ENCODE measurements at regions of chr22 and their contacts with region 1.

Region 1: GRCh38 chr22:38826386-38826785 is 17.4 kb downstream of the NPTXR start:
- DNase-seq: no peak
- ATAC-seq: no peak
- H3K4me3 ChIP-seq: no peak overlapping the region
- H3K27ac ChIP-seq: no peak overlapping the region
- H3K4me1 ChIP-seq: no peaks in the 10 kb centered on the region
- H3K27me3 ChIP-seq: no peaks in the 10 kb centered on the region
- CTCF ChIP-seq: no peak
- POLR2A ChIP-seq: no peak
- RAD21 ChIP-seq: no peak

Region 2: DNA sequence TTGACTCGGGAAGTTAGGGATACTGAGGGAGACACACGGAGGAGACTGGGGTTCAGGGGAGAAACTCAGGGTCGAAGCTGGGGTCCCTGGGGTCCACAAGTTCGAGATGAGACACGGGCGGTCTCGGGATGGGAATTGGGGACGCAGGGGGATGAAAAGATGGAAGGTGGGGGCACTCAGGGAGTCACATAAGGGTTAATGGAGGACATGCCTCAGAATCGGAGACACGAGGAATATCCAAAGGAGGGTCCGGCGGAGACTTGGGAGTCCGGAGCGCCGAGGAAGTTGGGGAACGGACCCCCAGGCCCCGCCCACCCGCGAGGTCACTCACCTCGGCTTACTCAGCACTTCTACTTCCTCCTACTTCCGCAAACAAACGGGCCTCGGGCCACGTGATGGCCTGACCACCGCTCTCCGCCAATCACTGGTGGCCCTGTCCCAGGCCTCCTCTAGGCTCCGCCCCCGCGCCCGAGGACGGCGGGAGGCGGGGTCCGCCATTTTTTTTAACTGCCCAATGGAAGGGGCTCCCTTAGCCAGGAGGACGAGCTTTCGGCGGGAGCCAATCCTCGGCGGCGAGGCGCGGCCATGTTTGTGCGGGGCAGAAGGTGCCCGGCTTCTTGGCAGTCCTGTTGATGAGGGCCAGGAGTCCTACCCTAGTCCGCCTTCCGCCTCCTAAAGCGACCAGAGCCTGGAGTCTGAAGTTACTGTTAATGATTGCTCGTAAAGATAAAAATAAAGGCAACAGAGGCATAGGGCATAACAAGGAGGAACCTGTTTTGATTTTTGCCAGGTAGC is 644.7 kb before region 1 on chr22 and contains the start of gene PLA2G6:
- CTCF ChIA-PET with region 1: no interaction called
- POLR2A ChIA-PET with region 1: no interaction called
- dilution Hi-C with region 1: no loop called
- in situ Hi-C with region 1: no loop called
- intact Hi-C with region 1: no loop called
- DNase-seq: peak; percentile 98
- ATAC-seq: peak; percentile 95
- H3K4me3 ChIP-seq: peak within 1 kb of the TSS; percentile 50
- H3K27ac ChIP-seq: peak within 1 kb of the TSS; percentile 87
- H3K4me1 ChIP-seq: peaks cover 22% of the 10 kb centered on the region
- H3K27me3 ChIP-seq: no peaks in the 10 kb centered on the region
- CTCF ChIP-seq: no peak
- POLR2A ChIP-seq: 0 out of 2 replicates have a peak, but pooled peaks have one; percentile 37
- RAD21 ChIP-seq: no peak
- total RNA-seq, gene PLA2G6: 3.9 and 6.1 TPM in 2 replicates

Region 3: DNA sequence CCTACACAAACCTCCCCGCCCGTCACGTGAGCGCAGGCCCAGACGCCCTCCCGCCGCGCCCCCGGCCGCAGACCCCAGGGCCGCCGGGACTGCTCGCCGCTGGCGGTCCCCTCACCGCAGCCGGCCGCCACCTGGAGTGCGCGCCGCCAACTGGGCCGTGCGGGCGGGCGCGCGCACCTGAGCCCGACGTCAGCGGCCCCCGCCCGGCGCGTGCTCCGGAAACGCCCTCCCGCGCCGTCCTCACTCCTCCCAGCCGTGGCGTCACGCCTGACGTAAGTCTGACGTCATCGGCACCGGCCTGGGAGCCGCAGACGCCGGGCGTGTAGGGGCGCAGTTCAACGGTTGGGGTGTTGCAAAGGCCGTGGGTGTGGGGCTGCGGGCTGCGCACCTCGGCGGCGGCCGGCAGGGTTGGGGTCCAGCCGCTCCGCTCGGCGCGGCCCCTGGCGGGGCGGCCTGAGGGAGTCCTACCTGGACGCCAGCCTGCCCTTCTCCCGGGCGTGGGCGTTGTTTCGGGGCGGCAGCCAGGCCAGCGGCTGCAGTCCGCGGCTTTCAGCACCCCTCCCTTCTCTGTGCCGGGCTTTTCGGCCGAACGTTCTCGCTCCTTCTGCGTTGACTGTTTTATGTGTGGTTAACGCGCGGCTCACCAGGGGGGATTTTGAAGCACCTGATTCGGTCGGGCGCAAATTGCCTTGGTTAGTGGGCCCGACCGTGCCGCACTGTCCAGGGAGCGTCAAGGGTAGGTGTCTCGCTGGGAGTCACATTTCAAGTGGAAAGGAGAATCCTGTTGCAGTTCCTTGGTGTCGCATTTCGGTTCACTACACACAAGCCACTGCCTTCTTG is 125.4 kb before region 1 on chr22 and contains the start of gene JOSD1:
- CTCF ChIA-PET with region 1: no interaction called
- POLR2A ChIA-PET with region 1: no interaction called
- dilution Hi-C with region 1: no loop called
- in situ Hi-C with region 1: no loop called
- intact Hi-C with region 1: no loop called
- DNase-seq: peak; percentile 95
- ATAC-seq: peak; percentile 30
- H3K4me3 ChIP-seq: peak within 1 kb of the TSS; percentile 96
- H3K27ac ChIP-seq: peak within 1 kb of the TSS; percentile 97
- H3K4me1 ChIP-seq: peaks cover 13% of the 10 kb centered on the region
- H3K27me3 ChIP-seq: no peaks in the 10 kb centered on the region
- CTCF ChIP-seq: no peak; the same call in 1 of the 2 replicates
- POLR2A ChIP-seq: peak; percentile 84
- RAD21 ChIP-seq: no peak
- total RNA-seq, gene JOSD1: 32.5 and 35.8 TPM in 2 replicates

Region 4: DNA sequence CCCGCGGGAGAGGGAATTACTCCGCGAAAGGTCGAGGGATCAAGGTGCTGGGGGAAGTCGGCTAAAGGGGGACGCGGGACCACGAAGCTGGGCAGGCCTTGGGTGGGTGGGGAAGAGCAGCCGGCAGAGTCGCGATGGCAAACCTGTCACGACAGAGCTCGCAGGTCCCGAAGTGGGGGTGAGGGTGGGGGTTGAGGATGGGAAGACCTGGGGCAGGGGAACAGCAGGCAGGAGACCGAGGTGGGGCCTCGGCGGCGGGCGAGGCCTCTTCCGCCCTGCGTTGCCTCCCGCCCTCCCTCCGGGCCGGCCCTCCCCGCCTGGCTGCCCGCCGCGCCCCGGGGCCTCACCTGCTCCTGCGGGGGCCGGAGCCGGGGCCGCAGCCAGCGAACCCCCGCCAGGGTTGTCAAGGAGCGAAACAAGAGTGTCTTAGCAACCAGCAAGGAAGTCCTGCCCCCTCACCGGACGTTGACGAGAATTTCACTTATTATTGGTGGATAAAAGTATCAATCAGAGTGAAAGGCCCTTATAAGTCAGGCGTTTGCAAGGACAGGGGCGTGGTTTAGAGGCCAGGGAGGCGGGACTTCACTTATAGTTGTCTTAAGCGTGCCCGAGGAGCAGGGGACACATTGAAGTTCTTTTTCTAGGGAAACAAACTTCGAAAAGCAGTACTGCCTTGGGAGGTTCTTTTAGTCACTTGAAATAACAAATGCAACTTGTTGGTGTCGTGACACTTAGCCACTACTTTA is 32.5 kb before region 1 on chr22 and contains the start of gene DNAL4:
- CTCF ChIA-PET with region 1: no interaction called
- POLR2A ChIA-PET with region 1: interaction called, 15 read pairs
- dilution Hi-C with region 1: no loop called
- in situ Hi-C with region 1: no loop called
- intact Hi-C with region 1: no loop called
- DNase-seq: peak; percentile 98
- ATAC-seq: peak; percentile 100
- H3K4me3 ChIP-seq: peak within 1 kb of the TSS; percentile 73
- H3K27ac ChIP-seq: peak within 1 kb of the TSS; percentile 63
- H3K4me1 ChIP-seq: peaks cover 4% of the 10 kb centered on the region
- H3K27me3 ChIP-seq: peaks cover 4% of the 10 kb centered on the region; the same call in 1 of the 2 replicates
- CTCF ChIP-seq: no peak
- POLR2A ChIP-seq: no peak
- RAD21 ChIP-seq: no peak
- total RNA-seq, gene DNAL4: 6.1 and 6.9 TPM in 2 replicates

Measured in IMR-90 (cell line).